CD4-positive, alpha-beta T cell (primary cell): ENCODE measurements at regions of chr6 and their contacts with region 1.

Region 1: DNA sequence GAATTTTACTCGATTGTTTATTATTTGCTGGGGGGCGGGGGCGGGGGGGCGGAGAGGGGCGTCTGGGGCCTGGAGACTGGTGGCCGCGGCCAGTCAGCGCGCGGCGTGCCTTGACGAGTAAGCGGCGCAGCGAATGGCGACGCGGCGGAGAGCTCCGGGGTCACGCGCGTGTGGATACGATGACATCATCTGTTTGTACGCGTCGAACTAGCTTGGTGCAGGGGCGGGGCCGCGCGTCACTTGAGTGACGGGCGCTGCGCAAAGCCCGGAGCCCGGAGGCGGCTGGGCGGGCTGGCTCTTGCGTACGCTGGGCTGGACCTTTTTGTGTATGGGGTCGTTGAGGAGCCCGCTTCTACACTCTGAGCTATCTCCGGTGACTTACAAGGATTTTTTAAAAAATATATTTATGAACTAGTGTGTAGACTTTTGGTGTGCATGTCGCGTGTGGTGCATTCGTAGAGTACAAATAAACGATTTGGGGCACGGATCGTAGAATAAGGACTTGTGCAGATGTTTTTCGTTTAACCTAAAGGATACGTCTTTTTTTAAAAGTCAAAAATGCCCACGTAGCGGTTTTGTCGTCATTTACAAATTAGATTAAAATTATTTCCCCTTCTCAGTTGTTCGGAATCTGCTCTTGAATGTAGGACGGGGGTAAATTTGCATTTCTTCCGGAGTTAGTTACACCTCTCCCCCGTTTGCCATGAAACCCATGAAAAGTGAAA is 2.2 kb upstream of the FOXO3 start:
- DNase-seq: peak; percentile 93 to 100 (median 97)
- ATAC-seq: peak; percentile 67
- H3K4me3 ChIP-seq: peak overlapping the region; percentile 99
- H3K4me3 Mint-ChIP-seq: peak overlapping the region; percentile 99
- H3K27ac ChIP-seq: peak overlapping the region; percentile 99 to 100
- H3K27ac Mint-ChIP-seq: peak overlapping the region; percentile 100
- H3K4me1 ChIP-seq: peaks cover 29% of the 10 kb centered on the region
- H3K4me1 Mint-ChIP-seq: peaks cover 20% of the 10 kb centered on the region
- H3K27me3 ChIP-seq: no peaks in the 10 kb centered on the region
- H3K27me3 Mint-ChIP-seq: no peaks in the 10 kb centered on the region
- CTCF ChIP-seq: no peak

Region 2: DNA sequence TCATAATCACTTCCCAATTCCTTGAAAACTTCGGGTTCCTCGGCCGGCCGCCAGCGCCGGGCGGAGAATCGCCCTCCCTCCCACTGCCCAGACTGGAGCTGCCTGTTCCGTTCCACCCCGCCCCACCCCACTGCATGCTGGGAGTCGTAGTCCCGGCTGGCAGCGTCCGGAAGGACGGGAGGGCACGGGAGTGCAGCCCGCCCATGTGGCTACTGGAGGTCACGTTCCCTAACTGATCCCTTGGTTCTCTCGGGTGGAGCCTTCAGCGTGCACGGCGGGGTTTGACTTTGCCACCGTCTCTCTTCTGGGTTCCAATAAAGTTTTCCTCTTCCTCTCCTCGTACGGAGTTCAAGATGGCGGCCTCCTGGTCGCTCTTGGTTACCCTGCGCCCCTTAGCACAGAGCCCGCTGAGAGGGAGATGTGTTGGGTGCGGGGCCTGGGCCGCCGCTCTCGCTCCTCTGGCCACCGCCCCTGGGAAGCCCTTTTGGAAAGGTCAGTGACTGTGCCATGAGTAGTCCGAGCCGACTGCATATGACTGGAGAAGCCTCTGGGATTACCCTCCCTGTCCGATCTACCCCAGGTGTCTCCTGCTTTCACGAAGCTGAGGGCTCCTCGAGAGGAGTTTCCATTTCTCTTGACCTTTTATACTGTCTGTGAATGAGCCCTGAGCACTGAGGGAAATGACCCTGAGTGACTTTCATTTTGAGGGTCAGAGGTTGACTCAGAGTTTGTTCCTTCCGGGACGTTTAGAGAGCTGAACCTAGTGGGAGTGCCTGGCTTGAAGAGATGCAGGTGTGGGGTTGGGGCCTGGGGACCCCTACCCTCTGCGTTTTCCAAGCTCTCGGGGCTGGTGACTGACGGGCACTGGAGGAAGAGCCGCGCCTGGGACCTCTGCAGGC is 263.6 kb before region 1 on chr6 and contains the start of gene AFG1L:
- CTCF ChIA-PET with region 1: no interaction called
- POLR2A ChIA-PET with region 1: interaction called, 10 read pairs
- intact Hi-C with region 1: no loop called
- DNase-seq: peak; percentile 77 to 90 (median 83)
- ATAC-seq: peak; percentile 89
- H3K4me3 ChIP-seq: peak within 1 kb of the TSS; percentile 91
- H3K4me3 Mint-ChIP-seq: peak within 1 kb of the TSS; percentile 97
- H3K27ac ChIP-seq: peak within 1 kb of the TSS; percentile 93 to 95
- H3K27ac Mint-ChIP-seq: peak within 1 kb of the TSS; percentile 96
- H3K4me1 ChIP-seq: peaks cover 17% of the 10 kb centered on the region
- H3K4me1 Mint-ChIP-seq: peaks cover 30% of the 10 kb centered on the region
- H3K27me3 ChIP-seq: no peaks in the 10 kb centered on the region
- H3K27me3 Mint-ChIP-seq: no peaks in the 10 kb centered on the region
- CTCF ChIP-seq: no peak
- total RNA-seq, gene AFG1L: 3.0 to 3.9 TPM

Region 3: DNA sequence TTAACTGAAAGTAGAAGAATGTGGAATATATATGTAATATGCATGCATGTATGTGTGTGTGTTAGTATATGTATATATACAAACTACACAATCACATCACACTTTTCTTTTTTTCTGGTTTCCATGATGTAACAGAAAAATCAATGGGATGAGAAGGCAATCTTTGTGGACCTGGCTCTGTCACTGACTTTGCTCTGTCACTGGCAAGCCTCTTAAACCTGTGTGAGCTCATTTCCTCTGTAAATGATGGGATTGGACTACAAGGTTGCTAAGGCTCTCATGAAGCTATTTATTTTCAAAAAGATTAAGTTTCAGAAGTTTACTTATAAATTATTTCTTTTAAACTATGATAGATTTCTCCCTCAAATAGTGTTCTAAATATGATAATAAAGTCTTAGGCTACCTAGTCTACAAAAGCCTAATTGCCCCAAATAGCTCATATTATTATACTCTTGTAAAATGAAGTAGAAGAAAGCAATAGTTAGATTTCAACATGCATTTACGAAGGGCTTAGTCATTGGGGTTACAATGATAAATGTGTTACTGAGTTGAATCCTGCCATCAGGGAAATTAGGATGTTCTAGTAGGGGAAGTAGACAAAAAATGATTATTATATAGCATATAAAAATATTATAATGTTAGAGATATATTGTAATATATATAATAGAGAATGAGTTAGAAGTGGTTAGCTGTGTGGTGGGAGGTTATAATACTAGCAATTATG is 134.4 kb before region 1 on chr6:
- CTCF ChIA-PET with region 1: no interaction called
- POLR2A ChIA-PET with region 1: no interaction called
- intact Hi-C with region 1: no loop called
- DNase-seq: no peak
- ATAC-seq: no peak
- H3K4me3 ChIP-seq: no peak overlapping the region
- H3K4me3 Mint-ChIP-seq: no peak overlapping the region
- H3K27ac ChIP-seq: no peak overlapping the region
- H3K27ac Mint-ChIP-seq: no peak overlapping the region
- H3K4me1 ChIP-seq: no peaks in the 10 kb centered on the region
- H3K4me1 Mint-ChIP-seq: no peaks in the 10 kb centered on the region
- H3K27me3 ChIP-seq: no peaks in the 10 kb centered on the region
- H3K27me3 Mint-ChIP-seq: no peaks in the 10 kb centered on the region
- CTCF ChIP-seq: no peak

Region 4: DNA sequence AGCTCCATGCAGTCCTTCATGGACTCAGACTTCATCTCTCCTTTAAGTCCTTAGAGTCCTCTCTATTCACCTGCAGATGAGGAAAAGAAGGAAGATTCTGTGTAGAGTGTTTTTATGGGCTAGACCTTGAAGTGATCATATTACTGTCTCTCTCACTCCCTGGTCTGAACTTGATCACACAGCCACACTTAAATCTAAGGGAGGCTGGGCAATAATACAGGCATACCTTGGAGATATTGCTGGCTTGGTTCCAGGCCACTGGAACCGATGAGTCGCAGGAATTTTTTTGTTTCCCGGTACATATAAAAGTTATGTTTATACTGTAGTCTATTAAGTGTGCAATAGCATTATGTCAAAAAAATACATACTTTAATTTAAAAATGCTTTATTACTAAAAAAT is 57.0 kb before region 1 on chr6:
- CTCF ChIA-PET with region 1: no interaction called
- POLR2A ChIA-PET with region 1: no interaction called
- intact Hi-C with region 1: no loop called
- DNase-seq: no peak
- ATAC-seq: no peak
- H3K4me3 ChIP-seq: no peak overlapping the region
- H3K4me3 Mint-ChIP-seq: no peak overlapping the region
- H3K27ac ChIP-seq: no peak overlapping the region
- H3K27ac Mint-ChIP-seq: no peak overlapping the region
- H3K4me1 ChIP-seq: no peaks in the 10 kb centered on the region
- H3K4me1 Mint-ChIP-seq: no peaks in the 10 kb centered on the region
- H3K27me3 ChIP-seq: no peaks in the 10 kb centered on the region
- H3K27me3 Mint-ChIP-seq: no peaks in the 10 kb centered on the region
- CTCF ChIP-seq: no peak

Region 5: DNA sequence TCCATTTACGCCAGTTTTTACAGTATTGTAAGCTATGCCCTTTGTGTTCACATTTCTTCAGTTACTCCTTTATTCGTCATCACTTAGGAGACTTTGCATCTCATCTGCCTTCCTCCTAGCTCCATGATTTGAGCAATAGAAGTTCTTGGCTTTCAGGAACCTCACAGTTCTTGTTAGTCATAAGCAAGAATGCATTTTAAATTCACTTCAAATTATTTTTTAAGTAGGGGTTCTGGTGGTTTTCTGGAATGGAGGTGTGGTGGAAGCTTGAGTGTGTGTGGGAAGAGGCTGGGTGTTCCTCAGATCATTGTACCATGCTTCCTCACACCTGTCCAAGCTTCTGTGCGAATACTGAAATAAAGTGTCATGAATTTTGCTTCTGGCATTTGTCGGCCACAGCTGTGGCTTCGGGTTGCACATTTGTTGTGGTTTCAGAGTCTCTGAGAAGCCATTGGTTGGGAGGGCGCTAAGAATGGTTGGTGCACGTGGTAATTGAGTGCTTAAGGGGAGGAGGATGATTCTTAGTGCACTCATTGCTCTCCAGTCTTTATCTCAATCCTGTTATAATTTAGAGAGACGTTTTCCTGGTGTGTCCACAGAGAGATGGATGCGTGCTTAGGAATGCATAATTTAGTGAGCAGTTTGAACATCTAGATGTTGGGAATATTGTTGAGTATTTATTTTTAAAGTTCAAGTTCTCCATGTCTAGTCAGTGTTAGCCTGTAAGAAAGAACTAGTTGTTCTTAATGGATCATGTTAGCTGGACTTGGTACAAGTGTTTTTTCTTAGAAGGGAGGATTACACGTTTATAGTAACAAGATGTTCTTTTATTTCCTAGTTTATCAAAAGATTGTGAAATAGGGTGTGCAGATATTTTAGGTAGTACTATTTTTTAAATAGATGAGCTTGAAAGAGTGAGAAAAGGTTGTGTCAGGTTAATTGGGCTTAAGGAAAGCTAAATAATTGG is 34.1 kb after region 1 on chr6:
- CTCF ChIA-PET with region 1: interaction called, 3 read pairs
- POLR2A ChIA-PET with region 1: interaction called, 22 read pairs
- intact Hi-C with region 1: loop called in 1 of 2 experiments (anchors 5 kb)
- DNase-seq: peak in 13 of 14 experiments; percentile 9 to 83 (median 21)
- ATAC-seq: peak; percentile 91
- H3K4me3 ChIP-seq: no peak overlapping the region
- H3K4me3 Mint-ChIP-seq: peak overlapping the region; percentile 9
- H3K27ac ChIP-seq: no peak overlapping the region
- H3K27ac Mint-ChIP-seq: no peak overlapping the region
- H3K4me1 ChIP-seq: peaks cover 22% of the 10 kb centered on the region
- H3K4me1 Mint-ChIP-seq: peaks cover 82% of the 10 kb centered on the region
- H3K27me3 ChIP-seq: no peaks in the 10 kb centered on the region
- H3K27me3 Mint-ChIP-seq: no peaks in the 10 kb centered on the region
- CTCF ChIP-seq: no peak

Region 6: DNA sequence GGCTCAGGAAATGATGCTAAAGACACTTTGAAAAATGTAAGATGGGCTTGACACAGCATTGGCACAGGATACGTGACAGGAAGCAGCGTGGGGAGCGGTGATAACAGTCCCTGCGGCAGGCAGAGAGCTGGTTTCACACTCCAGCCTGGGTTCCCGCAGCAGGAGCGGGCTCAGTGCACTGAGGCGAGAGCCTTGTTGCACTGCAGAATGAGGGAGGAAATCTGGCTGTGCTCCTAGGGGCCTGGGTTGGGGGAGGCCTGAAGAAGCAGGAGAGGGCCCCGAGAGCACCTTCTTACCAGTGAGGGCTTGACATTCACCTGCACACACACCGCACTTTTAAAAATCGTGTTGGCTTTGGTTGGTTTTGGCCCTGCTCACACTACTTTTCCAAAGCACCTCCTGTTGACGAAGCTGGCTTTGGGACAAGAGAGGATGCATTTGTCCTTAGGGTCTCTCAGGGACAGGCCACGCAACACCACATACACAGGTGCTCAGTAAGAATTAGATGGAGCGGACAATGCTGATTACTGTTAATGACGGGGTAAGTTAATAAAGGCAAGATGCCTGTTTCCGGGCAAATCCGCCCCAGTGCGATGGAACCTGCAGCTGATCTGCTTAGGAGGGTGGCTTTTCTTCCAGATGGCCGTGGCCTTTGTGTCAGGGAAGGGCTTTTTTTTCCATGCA is 240.3 kb after region 1 on chr6:
- CTCF ChIA-PET with region 1: no interaction called
- POLR2A ChIA-PET with region 1: interaction called, 16 read pairs
- intact Hi-C with region 1: no loop called
- DNase-seq: peak; percentile 21 to 80 (median 41)
- ATAC-seq: peak; percentile 95
- H3K4me3 ChIP-seq: peak overlapping the region; percentile 6
- H3K4me3 Mint-ChIP-seq: peak overlapping the region; percentile 78
- H3K27ac ChIP-seq: peak overlapping the region in 1 of 2 donors; percentile 37
- H3K27ac Mint-ChIP-seq: peak overlapping the region; percentile 61
- H3K4me1 ChIP-seq: peaks cover 19% of the 10 kb centered on the region
- H3K4me1 Mint-ChIP-seq: peaks cover 23% of the 10 kb centered on the region
- H3K27me3 ChIP-seq: no peaks in the 10 kb centered on the region
- H3K27me3 Mint-ChIP-seq: no peaks in the 10 kb centered on the region
- CTCF ChIP-seq: no peak

Region 7: GRCh38 chr6:109073344-109074132 is 515.0 kb after region 1 on chr6:
- CTCF ChIA-PET with region 1: interaction called, 6 read pairs
- POLR2A ChIA-PET with region 1: interaction called, 18 read pairs
- intact Hi-C with region 1: no loop called
- DNase-seq: peak in 11 of 14 experiments; percentile 17 to 87 (median 37)
- ATAC-seq: peak; percentile 74
- H3K4me3 ChIP-seq: no peak overlapping the region
- H3K4me3 Mint-ChIP-seq: peak overlapping the region; percentile 0
- H3K27ac ChIP-seq: no peak overlapping the region
- H3K27ac Mint-ChIP-seq: no peak overlapping the region
- H3K4me1 ChIP-seq: peaks cover 8% of the 10 kb centered on the region
- H3K4me1 Mint-ChIP-seq: peaks cover 25% of the 10 kb centered on the region
- H3K27me3 ChIP-seq: no peaks in the 10 kb centered on the region
- H3K27me3 Mint-ChIP-seq: no peaks in the 10 kb centered on the region
- CTCF ChIP-seq: peak; percentile 85